Heart left ventricle (tissue), 16 donors: ENCODE measurements at regions of chr1 and their contacts with region 1.

Region 1: DNA sequence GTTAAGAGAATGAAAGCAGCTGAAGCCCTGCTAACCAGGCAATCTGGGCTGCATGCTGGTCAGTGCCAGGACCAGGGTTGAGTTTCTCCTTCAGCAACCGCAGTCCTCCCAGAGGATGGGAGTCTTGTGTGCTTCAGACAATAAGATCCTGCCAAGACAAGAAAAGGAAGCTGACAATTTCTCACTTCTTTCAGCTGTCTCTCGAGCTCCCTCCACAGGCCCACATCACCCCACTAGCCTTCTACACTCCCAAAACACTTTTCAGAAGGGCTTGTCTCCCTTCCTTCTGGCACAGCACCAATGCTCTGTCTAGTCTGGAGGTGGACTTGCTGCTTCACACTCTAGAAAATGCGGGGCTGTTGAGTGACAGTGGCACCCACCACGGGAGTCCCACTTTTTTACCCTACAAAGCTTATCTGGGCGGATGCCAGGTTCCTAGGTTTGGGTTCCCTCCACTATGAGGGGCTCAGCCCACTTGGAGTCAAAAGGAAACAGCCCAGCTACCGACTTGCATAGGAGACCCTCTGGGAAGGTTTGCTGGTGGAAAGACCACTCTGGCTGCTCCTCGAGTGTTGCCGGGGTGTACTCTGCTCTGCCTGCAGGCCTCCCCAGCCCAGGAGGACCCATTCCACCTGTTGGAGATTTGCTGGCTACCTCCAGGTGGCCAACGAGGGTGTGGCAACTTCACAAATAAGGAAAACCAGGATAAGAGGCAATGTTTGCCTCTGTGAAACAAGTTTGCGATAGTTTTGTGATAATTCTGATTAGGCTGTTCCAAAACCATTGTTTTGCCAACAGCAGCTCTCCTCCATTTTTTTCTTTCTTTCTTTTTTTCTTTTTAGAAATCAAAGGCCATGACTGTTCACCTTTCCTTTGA is 68.9 kb downstream of the TENT5C start:
- DNase-seq: no peak
- ATAC-seq: no peak
- H3K4me3 ChIP-seq: no peak overlapping the region
- H3K27ac ChIP-seq: peak overlapping the region in 6 of 12 donors; percentile 63 to 90 (median 84)
- H3K4me1 ChIP-seq: peaks cover 4 to 79% (median 28%) of the 10 kb centered on the region in 12 donors
- H3K27me3 ChIP-seq: no peaks in the 10 kb centered on the region
- CTCF ChIP-seq: peak in 6 of 12 donors; percentile 16 to 35 (median 24)
- POLR2A ChIP-seq: no peak

Region 2: DNA sequence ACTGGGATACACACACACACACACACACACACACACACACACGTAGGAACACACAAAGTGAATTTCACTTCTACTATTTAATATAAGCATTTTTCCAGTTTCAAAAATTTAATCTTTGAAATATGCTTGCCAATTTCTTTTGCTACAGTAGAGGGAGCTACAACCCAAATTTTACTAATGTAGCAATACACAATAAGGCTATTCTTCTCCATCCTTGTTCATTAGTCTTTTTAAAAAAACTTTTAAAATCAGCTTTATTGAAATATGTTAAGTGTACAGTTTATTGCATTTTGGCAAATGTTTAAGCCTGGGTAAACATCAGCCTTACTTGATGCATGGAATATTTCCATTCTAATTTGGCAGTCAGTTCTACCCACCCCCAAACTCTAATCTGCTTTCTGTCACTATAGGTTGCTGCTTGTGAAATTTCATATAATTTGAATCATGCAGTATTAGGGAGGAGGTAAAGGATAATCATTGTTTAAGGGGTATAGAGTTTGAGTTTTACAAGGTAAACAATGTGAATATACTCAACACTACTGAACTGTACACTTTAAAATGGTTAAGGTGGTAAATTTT is 161.9 kb before region 1 on chr1:
- intact Hi-C with region 1: loop called in 1 of 10 experiments (anchors 5 kb)
- DNase-seq: no peak
- ATAC-seq: no peak
- H3K4me3 ChIP-seq: no peak overlapping the region
- H3K27ac ChIP-seq: no peak overlapping the region
- H3K4me1 ChIP-seq: no peaks in the 10 kb centered on the region
- H3K27me3 ChIP-seq: no peaks in the 10 kb centered on the region
- CTCF ChIP-seq: peak; percentile 15 to 68 (median 54)
- POLR2A ChIP-seq: no peak

Region 3: GRCh38 chr1:117534995-117535467 is 139.7 kb before region 1 on chr1:
- intact Hi-C with region 1: loop called in 7 of 10 experiments (anchors 1 to 10 kb)
- DNase-seq: peak in 2 of 5 donors; percentile 22 to 33
- ATAC-seq: peak; percentile 70 to 91 (median 88)
- H3K4me3 ChIP-seq: no peak overlapping the region
- H3K27ac ChIP-seq: no peak overlapping the region
- H3K4me1 ChIP-seq: no peaks in the 10 kb centered on the region
- H3K27me3 ChIP-seq: no peaks in the 10 kb centered on the region
- CTCF ChIP-seq: peak; percentile 49 to 74 (median 64)
- POLR2A ChIP-seq: no peak

Region 4: DNA sequence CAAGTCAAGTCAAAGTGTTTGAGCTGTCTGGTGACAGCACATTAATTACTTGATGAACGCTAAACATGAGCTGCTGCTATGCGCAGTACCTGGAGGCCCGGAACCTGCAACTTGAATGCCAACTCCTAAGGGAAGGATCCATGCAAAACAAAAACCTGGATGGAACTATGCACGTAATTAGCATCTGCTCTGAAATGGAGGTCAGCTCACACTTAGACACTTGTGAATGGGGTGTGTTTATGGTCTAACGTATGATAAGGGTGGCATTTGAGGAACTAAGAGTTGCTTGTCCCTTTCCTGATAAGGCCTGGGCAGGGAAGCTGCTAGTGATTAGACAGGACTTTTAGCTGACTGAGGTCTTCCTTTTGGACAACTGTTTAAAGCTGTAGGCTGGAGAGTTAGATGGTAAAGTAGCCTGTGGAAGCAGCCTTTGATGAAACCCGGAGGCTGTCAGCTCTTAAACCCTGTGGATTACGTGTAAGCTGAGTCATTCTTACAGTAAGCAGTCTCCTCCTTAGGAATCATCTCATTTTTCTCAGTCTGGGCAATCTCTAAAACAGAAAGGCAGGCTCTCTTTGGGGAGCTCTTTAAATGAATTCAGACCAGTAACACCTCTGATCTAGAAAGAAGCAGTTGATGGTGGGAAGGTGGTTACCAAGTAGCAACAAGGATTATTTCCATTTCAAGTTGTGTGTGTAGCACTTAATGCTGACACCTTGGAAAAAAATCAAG is 62.1 kb before region 1 on chr1:
- intact Hi-C with region 1: loop called in 7 of 10 experiments (anchors 2 to 5 kb)
- DNase-seq: no peak
- ATAC-seq: peak; percentile 31 to 51 (median 47)
- H3K4me3 ChIP-seq: no peak overlapping the region
- H3K27ac ChIP-seq: peak overlapping the region in 10 of 12 donors; percentile 12 to 65 (median 47)
- H3K4me1 ChIP-seq: peaks cover 0 to 74% (median 42%) of the 10 kb centered on the region in 12 donors
- H3K27me3 ChIP-seq: no peaks in the 10 kb centered on the region
- CTCF ChIP-seq: no peak
- POLR2A ChIP-seq: no peak

Region 5: GRCh38 chr1:117919376-117919775 is 244.6 kb after region 1 on chr1:
- intact Hi-C with region 1: no loop called
- DNase-seq: no peak
- ATAC-seq: no peak
- H3K4me3 ChIP-seq: no peak overlapping the region
- H3K27ac ChIP-seq: no peak overlapping the region
- H3K4me1 ChIP-seq: no peaks in the 10 kb centered on the region
- H3K27me3 ChIP-seq: no peaks in the 10 kb centered on the region
- CTCF ChIP-seq: no peak
- POLR2A ChIP-seq: no peak